Posterior vena cava (tissue), 2 donors: ENCODE measurements at regions of chr1 and their contacts with region 1.

Region 1: DNA sequence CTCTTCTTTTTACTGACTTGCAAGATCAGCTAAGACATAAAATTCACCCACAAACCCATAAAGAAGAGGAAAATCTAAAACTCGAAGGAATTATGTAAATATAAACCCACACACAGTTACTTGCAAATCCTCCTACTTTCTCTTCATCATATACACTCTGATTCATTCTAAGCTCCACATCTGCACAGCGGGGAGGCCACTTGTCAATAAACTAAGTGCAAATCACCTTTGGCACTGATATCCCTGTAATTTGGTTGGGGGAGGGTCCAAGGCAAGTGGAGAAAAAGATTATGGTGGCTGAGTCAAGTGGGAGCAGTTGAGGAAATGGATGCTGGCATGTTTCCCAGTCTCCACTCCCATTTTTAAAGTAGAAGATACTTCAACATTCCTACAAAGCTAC is 596.5 kb downstream of the MATN1 start:
- DNase-seq: no peak

Region 2: GRCh38 chr1:29550119-29550898 is 576.5 kb before region 1 on chr1:
- intact Hi-C with region 1: no loop called
- DNase-seq: peak; percentile 68

Region 3: DNA sequence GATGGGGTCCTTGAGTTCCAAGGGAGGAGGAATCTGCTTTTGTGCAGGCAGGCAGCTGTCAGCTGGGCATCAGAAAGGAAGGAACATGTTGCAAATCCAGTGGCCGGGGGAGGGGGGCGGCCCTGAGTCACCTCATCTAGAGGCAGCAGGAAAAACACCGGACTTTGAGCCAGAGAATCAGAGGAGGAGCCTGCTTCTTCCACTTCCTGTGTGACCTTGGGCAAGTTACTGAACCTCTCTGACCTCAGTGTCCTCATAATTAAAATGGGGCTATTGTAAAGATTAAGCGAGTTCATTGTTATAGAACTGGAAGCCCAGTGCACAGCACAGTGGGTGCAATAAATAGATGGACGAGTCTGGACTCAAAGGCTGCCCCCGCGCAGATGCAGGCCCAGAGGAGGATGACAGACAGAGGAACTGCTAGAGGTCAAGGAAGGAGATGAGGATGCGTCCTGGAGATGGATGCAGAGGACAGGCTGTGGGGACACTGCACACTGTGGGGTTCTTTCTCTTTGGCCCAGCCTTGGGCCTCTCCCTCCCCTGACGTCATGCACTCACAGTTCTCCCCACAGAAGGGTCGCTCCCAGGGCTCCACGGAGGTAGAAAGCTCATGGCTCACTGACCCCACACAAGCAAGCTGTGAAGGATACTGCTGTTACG is 117.7 kb before region 1 on chr1:
- intact Hi-C with region 1: no loop called
- DNase-seq: no peak

Region 4: DNA sequence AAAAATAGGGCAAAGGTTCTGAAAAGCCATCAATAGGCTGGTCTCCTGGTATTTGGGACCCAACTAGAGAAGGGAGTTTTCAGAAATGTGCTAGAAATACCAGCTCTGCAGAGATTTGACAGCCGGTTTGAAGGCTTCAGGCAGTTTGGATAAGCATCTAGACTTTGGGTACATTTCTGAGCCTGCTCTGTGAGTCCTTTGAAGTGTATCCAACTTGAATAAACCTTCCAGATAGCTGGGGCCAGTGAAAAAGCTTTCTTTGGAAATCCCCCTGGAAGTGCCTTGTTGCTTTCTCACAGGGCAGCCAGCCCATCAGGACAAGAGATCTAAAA is 1524.2 kb after region 1 on chr1:
- intact Hi-C with region 1: loop called in 1 of 2 experiments (anchors 5 kb)
- DNase-seq: no peak